ENCODE measurements at regions of chr20 and their contacts with region 1.

Region 1: DNA sequence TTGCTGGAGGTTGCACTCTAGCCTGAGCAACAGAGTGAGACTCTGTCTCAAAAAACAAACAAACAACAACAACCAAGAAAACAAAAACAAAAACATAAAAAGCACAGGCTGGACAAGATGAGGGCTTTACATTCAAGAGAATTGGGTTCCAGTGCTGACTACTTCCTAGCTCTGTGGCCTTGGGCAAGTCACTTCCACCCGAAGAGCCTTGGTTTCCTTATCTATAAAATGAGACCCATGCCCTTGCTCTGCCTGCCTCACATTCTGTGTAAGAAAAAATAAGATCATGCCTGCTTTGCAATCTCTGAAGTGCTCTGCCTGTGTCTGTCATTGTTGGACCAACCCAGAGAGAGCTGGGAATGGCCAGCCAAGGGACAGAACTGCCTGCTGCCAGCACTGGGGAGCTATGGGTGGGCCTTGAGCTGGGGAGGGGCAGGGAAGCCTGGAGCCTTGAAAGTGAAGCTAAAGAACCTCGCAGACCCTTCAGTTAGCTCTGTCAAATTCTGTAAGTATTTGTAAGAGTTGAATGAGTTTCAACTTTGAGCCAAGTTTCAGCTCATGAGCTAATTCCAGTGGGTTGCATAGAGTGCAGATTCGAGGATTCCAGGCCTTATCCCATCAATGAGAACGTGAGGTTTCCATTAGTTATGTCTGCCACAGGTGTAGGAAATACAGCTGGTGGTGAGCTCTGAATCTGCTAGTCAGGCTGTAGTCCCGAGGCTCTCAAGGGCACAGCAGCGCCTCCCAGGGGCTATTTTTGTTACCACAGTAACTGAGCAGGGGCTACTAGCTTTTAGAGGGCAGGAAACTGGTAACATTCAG is 93.2 kb downstream of the DLGAP4 start:
- DNase-seq: no peak
- ATAC-seq: no peak
- H3K4me3 ChIP-seq: no peak overlapping the region
- H3K27ac ChIP-seq: no peak overlapping the region
- H3K4me1 ChIP-seq: peaks cover 0 to 4% (median 0%) of the 10 kb centered on the region in 12 donors
- H3K27me3 ChIP-seq: peaks cover 0 to 39% (median 17%) of the 10 kb centered on the region in 9 donors
- CTCF ChIP-seq: peak in 6 of 12 donors; percentile 7 to 32 (median 26)
- POLR2A ChIP-seq: no peak

Region 2: GRCh38 chr20:36339646-36340472 is 59.5 kb before region 1 on chr20:
- intact Hi-C with region 1: loop called in 1 of 10 experiments (anchors 10 kb)
- DNase-seq: peak in 1 of 5 donors; percentile 37
- ATAC-seq: no peak
- H3K4me3 ChIP-seq: no peak overlapping the region
- H3K27ac ChIP-seq: no peak overlapping the region
- H3K4me1 ChIP-seq: no peaks in the 10 kb centered on the region
- H3K27me3 ChIP-seq: peaks cover 0 to 55% (median 6%) of the 10 kb centered on the region in 9 donors
- CTCF ChIP-seq: no peak
- POLR2A ChIP-seq: no peak

Region 3: GRCh38 chr20:36411861-36412454 is 12.6 kb after region 1 on chr20:
- intact Hi-C with region 1: no loop called
- DNase-seq: no peak
- ATAC-seq: no peak
- H3K4me3 ChIP-seq: no peak overlapping the region
- H3K27ac ChIP-seq: no peak overlapping the region
- H3K4me1 ChIP-seq: peaks cover 0 to 4% (median 0%) of the 10 kb centered on the region in 12 donors
- H3K27me3 ChIP-seq: peaks cover 0 to 13% (median 0%) of the 10 kb centered on the region in 9 donors
- CTCF ChIP-seq: no peak
- POLR2A ChIP-seq: no peak

Region 4: DNA sequence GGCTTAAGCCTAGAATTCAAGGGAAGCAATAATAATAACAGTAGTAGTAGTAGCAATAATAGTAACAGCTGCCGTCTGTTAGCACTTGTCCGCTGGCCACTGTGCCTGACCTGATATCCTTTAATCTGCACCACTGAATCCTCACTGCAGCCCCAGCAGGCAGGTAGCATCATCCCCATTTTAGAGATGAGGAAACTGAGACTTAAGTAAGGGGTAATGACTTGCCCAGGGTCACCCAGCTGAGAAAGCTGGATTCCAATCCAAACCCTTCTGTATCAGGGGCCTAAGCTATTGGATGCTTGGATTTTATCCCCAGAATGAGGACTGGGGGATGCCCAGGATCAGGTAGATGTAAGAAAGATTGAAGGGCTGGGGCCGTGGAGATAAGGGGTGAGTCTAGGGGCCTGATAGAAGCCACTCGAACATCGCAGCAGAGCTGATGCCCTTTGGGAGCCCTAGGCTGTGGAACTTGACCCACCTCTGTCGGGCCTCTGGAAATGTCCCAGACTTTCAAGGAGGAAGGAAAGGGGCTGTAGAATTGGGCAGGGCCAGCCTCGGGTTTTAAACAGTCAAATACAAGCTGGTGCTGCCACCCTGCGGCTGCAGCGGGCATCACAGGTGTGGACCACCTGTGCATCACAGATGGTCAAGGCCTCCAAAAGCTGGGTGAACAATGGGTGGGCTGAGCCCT is 39.8 kb after region 1 on chr20:
- intact Hi-C with region 1: no loop called
- DNase-seq: peak; percentile 37 to 80 (median 53)
- ATAC-seq: peak in 3 of 4 donors; percentile 59 to 72 (median 63)
- H3K4me3 ChIP-seq: no peak overlapping the region
- H3K27ac ChIP-seq: no peak overlapping the region
- H3K4me1 ChIP-seq: peaks cover 0 to 8% (median 0%) of the 10 kb centered on the region in 12 donors
- H3K27me3 ChIP-seq: peaks cover 0 to 16% (median 3%) of the 10 kb centered on the region in 9 donors
- CTCF ChIP-seq: peak; percentile 75 to 90 (median 82)
- POLR2A ChIP-seq: no peak

Region 5: GRCh38 chr20:36454698-36455427 is 55.5 kb after region 1 on chr20:
- intact Hi-C with region 1: no loop called
- DNase-seq: peak in 4 of 5 donors; percentile 45 to 56 (median 51)
- ATAC-seq: peak; percentile 68 to 92 (median 72)
- H3K4me3 ChIP-seq: peak overlapping the region in 2 of 12 donors; percentile 7 to 17
- H3K27ac ChIP-seq: peak overlapping the region in 1 of 12 donors; percentile 13
- H3K4me1 ChIP-seq: peaks cover 0 to 13% (median 9%) of the 10 kb centered on the region in 12 donors
- H3K27me3 ChIP-seq: no peaks in the 10 kb centered on the region
- CTCF ChIP-seq: no peak
- POLR2A ChIP-seq: no peak